Activated CD4-positive, alpha-beta memory T cell treated with anti-CD3 and anti-CD28 coated beads for 36 hours (primary cell): ENCODE measurements at regions of chr3 and their contacts with region 1.

Region 1: GRCh38 chr3:141875374-141875892 is 1.0 kb upstream of the ATP1B3 start:
- DNase-seq: peak; percentile 91
- H3K4me3 Mint-ChIP-seq: peak overlapping the region; percentile 88
- H3K27ac Mint-ChIP-seq: peak overlapping the region; percentile 92
- H3K4me1 Mint-ChIP-seq: peaks cover 32% of the 10 kb centered on the region
- H3K27me3 Mint-ChIP-seq: no peaks in the 10 kb centered on the region

Region 2: DNA sequence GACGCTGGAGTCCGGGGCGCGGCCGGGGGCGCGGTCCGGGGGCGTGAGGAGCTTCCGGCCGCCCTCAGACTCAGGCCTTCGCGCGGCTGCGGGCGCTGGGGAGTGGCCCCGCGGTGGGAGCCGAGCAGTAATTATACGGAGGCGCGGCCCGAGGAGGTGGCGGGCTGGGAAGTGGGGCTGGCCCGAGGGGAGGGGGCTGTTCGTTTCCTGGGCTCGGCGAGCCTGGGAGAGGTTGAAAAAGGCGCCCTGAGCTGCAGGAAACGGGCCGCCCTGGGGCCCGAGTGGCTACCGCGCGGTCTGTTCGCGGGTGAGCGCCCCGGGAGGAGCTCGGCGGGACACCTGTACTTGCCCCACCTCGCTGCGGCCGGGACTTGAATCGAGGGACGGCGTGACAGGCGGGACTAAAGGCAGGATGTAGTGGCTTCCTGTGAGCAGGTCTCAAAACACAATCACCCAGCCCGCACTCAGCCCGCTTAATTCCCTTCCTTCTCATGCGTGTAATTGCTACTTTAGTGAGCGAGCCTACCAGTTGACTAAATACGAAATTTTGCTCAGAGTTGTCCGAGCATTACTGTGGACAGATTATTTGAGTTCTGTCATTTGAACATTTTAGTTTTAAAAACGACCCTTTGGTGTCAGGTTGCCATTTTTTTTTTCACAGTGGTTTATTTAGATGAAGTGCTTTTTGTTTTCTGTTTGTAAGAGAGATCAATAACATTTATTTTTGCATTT is 387.7 kb before region 1 on chr3:
- CTCF ChIA-PET with region 1: no interaction called
- POLR2A ChIA-PET with region 1: interaction called, 6 read pairs
- intact Hi-C with region 1: loop called (anchors 2 kb)
- DNase-seq: peak; percentile 94
- H3K4me3 Mint-ChIP-seq: peak overlapping the region; percentile 84
- H3K27ac Mint-ChIP-seq: peak overlapping the region; percentile 94
- H3K4me1 Mint-ChIP-seq: peaks cover 67% of the 10 kb centered on the region
- H3K27me3 Mint-ChIP-seq: no peaks in the 10 kb centered on the region

Region 3: DNA sequence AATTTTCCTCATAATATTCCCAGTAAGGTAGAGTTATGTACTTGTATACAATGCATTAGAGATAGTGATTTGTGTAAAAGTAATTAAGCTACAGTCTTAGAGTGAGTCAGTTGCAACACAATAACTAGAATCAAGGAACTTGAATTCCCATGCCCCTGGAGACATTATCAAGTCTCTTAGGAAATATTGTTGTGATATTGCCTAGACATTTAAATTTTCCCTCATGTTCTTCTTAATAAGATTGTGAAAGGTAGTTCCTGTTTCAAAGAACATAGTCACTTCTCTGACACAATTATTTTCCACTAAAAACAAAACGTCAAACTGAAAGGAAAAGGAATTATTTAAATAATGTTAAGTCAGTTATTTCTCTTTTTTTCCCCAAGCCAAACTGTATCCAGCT is 11.9 kb before region 1 on chr3:
- CTCF ChIA-PET with region 1: interaction called, 10 read pairs
- POLR2A ChIA-PET with region 1: no interaction called
- intact Hi-C with region 1: no loop called
- DNase-seq: no peak
- H3K4me3 Mint-ChIP-seq: no peak overlapping the region
- H3K27ac Mint-ChIP-seq: no peak overlapping the region
- H3K4me1 Mint-ChIP-seq: peaks cover 2% of the 10 kb centered on the region
- H3K27me3 Mint-ChIP-seq: no peaks in the 10 kb centered on the region

Region 4: GRCh38 chr3:141905129-141905528 is 29.7 kb after region 1 on chr3:
- CTCF ChIA-PET with region 1: interaction called, 7 read pairs
- POLR2A ChIA-PET with region 1: interaction called, 5 read pairs
- intact Hi-C with region 1: loop called (anchors 1 kb)
- DNase-seq: no peak
- H3K4me3 Mint-ChIP-seq: peak overlapping the region; percentile 4
- H3K27ac Mint-ChIP-seq: peak overlapping the region; percentile 52
- H3K4me1 Mint-ChIP-seq: peaks cover 33% of the 10 kb centered on the region
- H3K27me3 Mint-ChIP-seq: no peaks in the 10 kb centered on the region

Region 5: GRCh38 chr3:142148792-142149672 is 273.6 kb after region 1 on chr3 and contains the start of gene TFDP2:
- CTCF ChIA-PET with region 1: no interaction called
- POLR2A ChIA-PET with region 1: no interaction called
- intact Hi-C with region 1: loop called (anchors 5 kb)
- DNase-seq: peak; percentile 90
- H3K4me3 Mint-ChIP-seq: peak within 1 kb of the TSS; percentile 79
- H3K27ac Mint-ChIP-seq: no peak within 1 kb of the TSS
- H3K4me1 Mint-ChIP-seq: peaks cover 26% of the 10 kb centered on the region
- H3K27me3 Mint-ChIP-seq: no peaks in the 10 kb centered on the region
- total RNA-seq, gene TFDP2: 19.1 to 21.5 TPM